HCT116 (cell line): ENCODE measurements at regions of chr16 and their contacts with region 1.

Region 1: GRCh38 chr16:58487566-58488351 is 12.2 kb upstream of the NDRG4 start:
- DNase-seq: peak; percentile 56
- ATAC-seq: peak; percentile 95
- H3K4me3 ChIP-seq: no peak overlapping the region
- H3K27ac ChIP-seq: no peak overlapping the region
- H3K4me1 ChIP-seq: peaks cover 0 to 4% of the 10 kb centered on the region in 2 experiments; a peak in 3 of 4 replicates
- H3K27me3 ChIP-seq: no peaks in the 10 kb centered on the region
- CTCF ChIP-seq: peak; percentile 86 to 97 (median 91)
- POLR2A ChIP-seq: no peak
- RAD21 ChIP-seq: peak; percentile 95

Region 2: GRCh38 chr16:57141822-57142631 is 1345.7 kb before region 1 on chr16:
- CTCF ChIA-PET with region 1: no interaction called
- POLR2A ChIA-PET with region 1: no interaction called
- RAD21 ChIA-PET with region 1: no interaction called
- intact Hi-C with region 1: no loop called
- DNase-seq: no peak
- ATAC-seq: no peak
- H3K4me3 ChIP-seq: no peak overlapping the region
- H3K27ac ChIP-seq: no peak overlapping the region
- H3K4me1 ChIP-seq: no peaks in the 10 kb centered on the region
- H3K27me3 ChIP-seq: no peaks in the 10 kb centered on the region
- CTCF ChIP-seq: no peak
- POLR2A ChIP-seq: no peak
- RAD21 ChIP-seq: no peak

Region 3: DNA sequence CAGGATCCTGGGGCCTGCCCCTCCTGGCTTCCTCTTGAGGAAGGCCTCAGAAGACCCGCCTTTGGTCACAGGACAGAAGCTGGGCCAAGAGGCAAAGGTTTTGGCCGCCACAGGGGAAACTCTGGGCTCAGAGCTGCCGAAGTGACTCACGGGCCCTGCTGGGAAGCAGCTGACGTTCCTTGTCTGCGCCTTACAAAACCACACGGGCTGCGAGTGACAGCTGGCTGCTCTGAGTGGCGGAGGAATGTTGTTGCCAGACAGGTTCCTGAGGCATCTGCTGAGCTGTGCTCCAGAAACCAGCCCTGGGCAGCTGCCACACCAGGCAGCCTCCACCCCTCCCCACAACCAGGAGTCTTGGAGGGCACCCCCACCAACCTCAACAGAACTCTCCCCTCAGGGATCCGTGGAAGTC is 671.4 kb before region 1 on chr16:
- CTCF ChIA-PET with region 1: no interaction called
- POLR2A ChIA-PET with region 1: no interaction called
- RAD21 ChIA-PET with region 1: no interaction called
- intact Hi-C with region 1: no loop called
- DNase-seq: peak; percentile 73
- ATAC-seq: peak; percentile 95
- H3K4me3 ChIP-seq: peak overlapping the region in 1 of 2 experiments; percentile 33; a peak in 1 of 4 replicates
- H3K27ac ChIP-seq: peak overlapping the region; percentile 3; the same call in 1 of the 2 replicates
- H3K4me1 ChIP-seq: peaks cover 20 to 33% of the 10 kb centered on the region in 2 experiments
- H3K27me3 ChIP-seq: no peaks in the 10 kb centered on the region
- CTCF ChIP-seq: no peak
- POLR2A ChIP-seq: no peak
- RAD21 ChIP-seq: peak; percentile 11; the same call in 1 of the 2 replicates

Region 4: GRCh38 chr16:58148526-58148925 is 339.2 kb before region 1 on chr16:
- CTCF ChIA-PET with region 1: no interaction called
- POLR2A ChIA-PET with region 1: no interaction called
- RAD21 ChIA-PET with region 1: no interaction called
- intact Hi-C with region 1: loop called (anchors 5 kb)
- DNase-seq: no peak
- ATAC-seq: no peak
- H3K4me3 ChIP-seq: no peak overlapping the region
- H3K27ac ChIP-seq: no peak overlapping the region
- H3K4me1 ChIP-seq: no peaks in the 10 kb centered on the region
- H3K27me3 ChIP-seq: 0 out of 2 replicates have a peak, but pooled peaks cover 2% of the 10 kb centered on the region
- CTCF ChIP-seq: no peak
- POLR2A ChIP-seq: no peak
- RAD21 ChIP-seq: no peak

Region 5: DNA sequence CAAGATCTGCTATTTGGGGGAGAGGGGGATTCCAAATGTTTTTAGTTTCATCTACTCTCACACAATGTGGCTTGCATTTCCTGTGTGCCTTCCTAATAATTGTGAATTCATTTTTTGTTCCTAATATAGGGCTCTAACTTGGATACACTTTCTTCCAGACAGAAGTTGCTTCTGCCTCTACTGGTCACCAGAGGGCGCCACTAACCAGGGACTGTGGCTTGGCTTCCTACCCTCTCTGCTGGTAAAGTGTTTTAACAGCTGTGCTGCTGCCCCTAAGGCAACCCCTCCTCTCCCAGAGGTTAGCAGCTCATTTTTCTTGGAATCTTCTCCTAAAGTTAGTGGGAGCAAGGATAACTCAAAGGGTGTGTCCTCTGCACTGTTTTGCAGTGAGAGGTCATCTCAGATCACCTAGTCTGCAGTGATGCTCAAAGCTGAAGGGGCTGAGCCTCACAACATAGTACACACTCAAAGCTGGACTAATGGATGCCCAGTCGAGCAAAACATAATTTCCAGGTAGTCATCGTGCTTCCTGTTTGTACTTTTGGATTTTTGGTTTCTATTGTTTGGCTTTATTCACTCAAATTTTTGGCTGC is 187.9 kb before region 1 on chr16:
- CTCF ChIA-PET with region 1: interaction called, 20 read pairs
- POLR2A ChIA-PET with region 1: no interaction called
- RAD21 ChIA-PET with region 1: interaction called, 6 to 7 read pairs
- intact Hi-C with region 1: loop called (anchors 2 kb)
- DNase-seq: peak; percentile 13
- ATAC-seq: peak; percentile 89
- H3K4me3 ChIP-seq: no peak overlapping the region
- H3K27ac ChIP-seq: no peak overlapping the region
- H3K4me1 ChIP-seq: no peaks in the 10 kb centered on the region
- H3K27me3 ChIP-seq: no peaks in the 10 kb centered on the region
- CTCF ChIP-seq: peak; percentile 71 to 96 (median 87); a peak in 5 of 6 replicates
- POLR2A ChIP-seq: no peak
- RAD21 ChIP-seq: peak; percentile 75

Region 6: DNA sequence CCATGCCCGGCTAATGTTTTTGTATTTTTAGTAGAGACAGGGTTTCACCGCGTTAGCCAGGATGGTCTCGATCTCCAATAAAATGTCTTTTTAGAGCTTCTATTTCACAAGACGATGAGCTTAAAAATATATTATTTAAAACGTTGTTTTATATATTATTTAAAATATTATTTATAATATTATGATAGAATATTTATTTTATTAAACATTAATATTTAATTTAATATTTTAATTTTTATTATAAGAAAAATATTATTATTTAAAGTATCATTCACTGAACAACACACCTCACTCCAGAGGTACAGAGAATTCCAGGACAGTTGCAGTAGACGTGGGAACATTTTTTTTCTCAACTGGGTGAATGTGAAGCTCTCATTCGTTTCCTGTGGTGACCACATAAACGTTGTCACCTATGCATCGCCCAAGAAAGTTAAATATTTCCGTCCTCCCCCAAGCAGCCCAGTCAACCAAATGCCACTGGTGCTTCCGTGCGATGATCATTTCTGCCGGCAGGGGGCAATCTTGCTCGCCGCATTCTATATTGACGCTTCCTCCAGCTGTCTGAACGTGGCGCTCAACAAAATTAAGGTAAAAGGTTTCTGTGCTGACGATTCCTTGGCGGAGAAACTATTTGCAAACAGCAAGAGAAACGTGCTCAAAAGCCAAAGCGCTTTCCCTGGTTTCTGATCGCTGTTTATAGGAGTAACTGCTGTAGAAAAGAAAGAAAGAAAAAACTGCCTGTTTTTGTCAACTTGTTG is 151.2 kb before region 1 on chr16:
- CTCF ChIA-PET with region 1: interaction called, 92 read pairs
- POLR2A ChIA-PET with region 1: interaction called, 7 read pairs
- RAD21 ChIA-PET with region 1: interaction called, 9 to 15 read pairs
- intact Hi-C with region 1: loop called (anchors 1 kb)
- DNase-seq: peak; percentile 77
- ATAC-seq: peak; percentile 81
- H3K4me3 ChIP-seq: 0 out of 4 replicates have a peak overlapping the region, but pooled peaks of 1 of the 2 experiments have one; percentile 2
- H3K27ac ChIP-seq: no peak overlapping the region
- H3K4me1 ChIP-seq: peaks cover 6 to 10% of the 10 kb centered on the region in 2 experiments
- H3K27me3 ChIP-seq: no peaks in the 10 kb centered on the region
- CTCF ChIP-seq: peak; percentile 91 to 98 (median 95)
- POLR2A ChIP-seq: no peak
- RAD21 ChIP-seq: peak; percentile 89

Region 7: DNA sequence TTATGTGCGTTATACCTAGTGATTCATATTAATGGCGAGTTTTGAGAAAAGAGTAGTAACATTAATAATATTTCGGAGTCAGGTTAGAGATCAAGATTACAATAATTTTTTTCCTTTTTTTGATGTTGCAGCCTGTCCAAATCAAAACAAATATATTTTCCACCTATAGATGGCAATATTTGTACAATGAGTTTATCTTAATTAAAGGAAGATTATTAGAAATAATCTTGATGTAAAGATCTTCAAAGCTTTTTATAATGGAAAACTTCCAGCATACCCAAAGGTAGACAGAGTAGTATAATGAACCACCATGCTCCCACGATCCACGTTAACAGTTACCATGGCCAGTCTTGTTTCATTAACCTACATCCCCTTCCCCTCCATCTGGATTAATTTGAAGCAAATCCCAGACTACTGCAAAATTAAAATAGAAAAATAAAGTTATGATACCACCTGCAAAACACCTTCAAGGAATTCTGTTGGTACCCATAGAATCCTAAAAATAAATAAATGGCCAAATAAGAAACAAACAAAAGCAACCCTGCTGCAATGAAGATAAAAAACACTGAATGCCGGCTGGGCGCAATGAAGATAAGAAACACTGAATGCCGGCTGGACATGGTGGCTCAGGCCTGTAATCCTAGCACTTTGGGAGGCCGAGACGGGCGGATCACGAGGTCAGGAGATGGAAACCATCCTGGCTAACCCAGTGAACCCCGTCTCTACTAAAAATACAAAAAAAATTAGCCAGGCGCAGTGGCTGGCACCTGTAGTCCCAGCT is 142.0 kb before region 1 on chr16:
- CTCF ChIA-PET with region 1: interaction called, 14 read pairs
- POLR2A ChIA-PET with region 1: no interaction called
- RAD21 ChIA-PET with region 1: no interaction called
- intact Hi-C with region 1: no loop called
- DNase-seq: no peak
- ATAC-seq: no peak
- H3K4me3 ChIP-seq: no peak overlapping the region
- H3K27ac ChIP-seq: no peak overlapping the region
- H3K4me1 ChIP-seq: no peaks in the 10 kb centered on the region
- H3K27me3 ChIP-seq: peaks cover 9% of the 10 kb centered on the region
- CTCF ChIP-seq: peak in 2 of 3 experiments; percentile 41 to 52; a peak in 2 of 6 replicates
- POLR2A ChIP-seq: no peak
- RAD21 ChIP-seq: peak; percentile 45

Region 8: DNA sequence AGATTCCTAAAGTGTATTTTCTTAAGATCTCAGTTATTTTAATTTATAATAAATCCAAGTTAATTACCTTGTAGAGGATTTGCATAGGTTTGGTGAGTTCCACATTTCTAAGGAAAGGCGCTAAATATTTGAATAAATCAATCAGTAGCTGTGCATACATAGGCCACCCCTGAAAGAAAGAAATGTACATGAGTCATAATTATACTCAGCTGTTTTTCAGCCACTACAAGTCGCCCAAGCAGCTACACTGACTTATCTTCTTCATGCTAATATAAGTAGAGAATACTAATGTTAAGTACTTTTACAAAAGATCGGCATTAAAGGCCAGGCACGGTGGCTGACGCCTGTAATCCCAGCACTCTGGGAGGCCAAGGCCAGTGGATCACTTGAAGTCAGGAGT is 42.4 kb after region 1 on chr16:
- CTCF ChIA-PET with region 1: no interaction called
- POLR2A ChIA-PET with region 1: no interaction called
- RAD21 ChIA-PET with region 1: no interaction called
- intact Hi-C with region 1: no loop called
- DNase-seq: no peak
- ATAC-seq: no peak
- H3K4me3 ChIP-seq: no peak overlapping the region
- H3K27ac ChIP-seq: no peak overlapping the region
- H3K4me1 ChIP-seq: no peaks in the 10 kb centered on the region
- H3K27me3 ChIP-seq: no peaks in the 10 kb centered on the region
- CTCF ChIP-seq: no peak
- POLR2A ChIP-seq: no peak
- RAD21 ChIP-seq: no peak

Region 9: DNA sequence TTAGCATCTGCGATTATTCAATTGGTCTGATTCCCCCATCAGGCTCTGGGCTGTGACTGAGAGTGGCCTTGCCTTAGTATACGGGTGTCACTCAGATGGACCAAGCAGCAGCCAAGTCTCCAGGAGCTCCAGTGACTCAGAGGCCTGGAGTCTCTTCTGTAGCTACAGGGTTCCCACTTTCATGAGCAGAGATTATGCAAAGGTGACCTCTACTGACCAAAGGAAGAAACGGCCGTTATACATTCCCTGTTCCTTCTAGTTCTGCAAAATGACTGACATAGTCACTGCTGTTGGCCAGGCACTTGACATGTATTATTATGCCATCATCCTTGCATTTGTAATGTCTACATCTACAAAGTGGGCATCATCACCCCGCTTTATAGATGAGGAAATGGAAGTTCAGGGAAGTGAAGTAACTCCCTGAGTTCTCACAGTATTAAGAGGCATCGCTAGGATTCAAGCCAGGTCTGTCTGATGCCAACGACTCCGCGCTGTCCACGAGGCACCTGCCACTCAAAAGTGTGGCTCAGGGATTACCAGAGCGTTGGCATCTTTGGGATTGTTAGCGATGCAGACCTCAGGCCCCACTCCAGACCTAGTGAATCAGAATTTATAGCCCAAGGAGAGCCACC is 173.6 kb after region 1 on chr16:
- CTCF ChIA-PET with region 1: interaction called, 18 read pairs
- POLR2A ChIA-PET with region 1: no interaction called
- RAD21 ChIA-PET with region 1: interaction called, 3 read pairs
- intact Hi-C with region 1: no loop called
- DNase-seq: peak; percentile 78
- ATAC-seq: peak; percentile 98
- H3K4me3 ChIP-seq: no peak overlapping the region
- H3K27ac ChIP-seq: no peak overlapping the region
- H3K4me1 ChIP-seq: peaks cover 0 to 4% of the 10 kb centered on the region in 2 experiments; a peak in 1 of 4 replicates
- H3K27me3 ChIP-seq: no peaks in the 10 kb centered on the region
- CTCF ChIP-seq: peak; percentile 71 to 81 (median 78)
- POLR2A ChIP-seq: no peak
- RAD21 ChIP-seq: peak; percentile 91

Region 10: DNA sequence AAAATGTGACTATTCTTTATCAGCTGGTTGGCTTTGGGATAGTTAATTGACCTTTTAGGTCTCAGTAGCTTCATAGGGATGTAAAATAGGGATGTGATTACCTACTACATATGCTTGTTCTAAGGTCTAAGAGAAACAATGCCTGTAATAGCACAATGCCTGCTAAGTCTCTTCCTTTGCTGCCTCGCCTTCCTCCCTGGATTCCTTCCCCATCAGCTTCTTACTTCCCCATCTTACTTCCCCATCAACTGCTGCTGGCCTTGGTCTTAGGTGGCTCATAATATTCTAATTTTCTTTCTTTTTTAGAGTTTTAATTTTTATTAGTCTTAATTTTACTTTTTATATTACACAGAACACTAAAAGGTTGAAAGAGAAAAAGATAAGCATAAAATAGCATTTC is 305.6 kb after region 1 on chr16:
- CTCF ChIA-PET with region 1: no interaction called
- POLR2A ChIA-PET with region 1: no interaction called
- RAD21 ChIA-PET with region 1: no interaction called
- intact Hi-C with region 1: no loop called
- DNase-seq: no peak
- ATAC-seq: no peak
- H3K4me3 ChIP-seq: no peak overlapping the region
- H3K27ac ChIP-seq: no peak overlapping the region
- H3K4me1 ChIP-seq: no peaks in the 10 kb centered on the region
- H3K27me3 ChIP-seq: peaks cover 14% of the 10 kb centered on the region; the same call in 1 of the 2 replicates
- CTCF ChIP-seq: no peak
- POLR2A ChIP-seq: no peak
- RAD21 ChIP-seq: no peak